Gastrocnemius medialis (tissue), 4 donors: ENCODE measurements at regions of chr21 and their contacts with region 1.

Region 1: GRCh38 chr21:27564684-27565301 is 597.9 kb upstream of the ADAMTS5 start:
- DNase-seq: peak in 1 of 2 donors; percentile 42
- ATAC-seq: peak in 1 of 2 donors; percentile 76
- H3K4me3 ChIP-seq: no peak overlapping the region
- H3K27ac ChIP-seq: peak overlapping the region in 2 of 4 donors; percentile 8 to 44
- H3K4me1 ChIP-seq: peaks cover 6 to 14% of the 10 kb centered on the region in 2 donors
- H3K27me3 ChIP-seq: no peaks in the 10 kb centered on the region
- CTCF ChIP-seq: peak; percentile 32 to 69 (median 58)
- POLR2A ChIP-seq: no peak

Region 2: DNA sequence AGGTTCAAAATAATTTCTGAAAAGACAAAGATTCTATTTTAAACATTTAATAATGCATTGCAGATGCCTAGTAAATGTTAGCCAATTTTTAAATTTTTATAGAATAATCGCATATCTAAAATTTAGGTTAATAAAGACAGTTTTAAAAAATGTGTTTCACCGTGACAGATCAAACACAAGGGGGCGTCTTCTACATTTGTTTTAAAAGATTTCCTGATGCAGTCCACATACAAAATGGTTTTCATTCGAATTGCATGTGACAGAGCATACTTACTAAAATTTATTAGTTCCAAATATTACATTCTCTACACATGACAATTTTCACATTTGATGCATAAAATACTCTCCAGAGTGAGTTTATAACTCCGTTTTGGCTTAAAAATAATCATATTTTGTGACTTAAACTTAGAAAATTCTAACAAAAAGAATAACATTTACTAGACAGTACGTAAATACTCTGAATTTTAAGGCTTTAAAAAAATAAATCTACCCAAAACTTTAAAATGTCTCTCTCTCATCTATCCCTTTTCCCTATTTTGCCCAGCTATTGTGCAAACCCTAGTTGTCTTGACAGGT is 795.1 kb before region 1 on chr21:
- in situ Hi-C with region 1: no loop called
- intact Hi-C with region 1: loop called (anchors 10 kb)
- DNase-seq: no peak
- ATAC-seq: no peak
- H3K4me3 ChIP-seq: no peak overlapping the region
- H3K27ac ChIP-seq: no peak overlapping the region
- H3K4me1 ChIP-seq: peaks cover 0 to 5% of the 10 kb centered on the region in 2 donors
- H3K27me3 ChIP-seq: no peaks in the 10 kb centered on the region
- CTCF ChIP-seq: peak in 4 of 5 experiments; percentile 39 to 68 (median 49)
- POLR2A ChIP-seq: no peak

Region 3: DNA sequence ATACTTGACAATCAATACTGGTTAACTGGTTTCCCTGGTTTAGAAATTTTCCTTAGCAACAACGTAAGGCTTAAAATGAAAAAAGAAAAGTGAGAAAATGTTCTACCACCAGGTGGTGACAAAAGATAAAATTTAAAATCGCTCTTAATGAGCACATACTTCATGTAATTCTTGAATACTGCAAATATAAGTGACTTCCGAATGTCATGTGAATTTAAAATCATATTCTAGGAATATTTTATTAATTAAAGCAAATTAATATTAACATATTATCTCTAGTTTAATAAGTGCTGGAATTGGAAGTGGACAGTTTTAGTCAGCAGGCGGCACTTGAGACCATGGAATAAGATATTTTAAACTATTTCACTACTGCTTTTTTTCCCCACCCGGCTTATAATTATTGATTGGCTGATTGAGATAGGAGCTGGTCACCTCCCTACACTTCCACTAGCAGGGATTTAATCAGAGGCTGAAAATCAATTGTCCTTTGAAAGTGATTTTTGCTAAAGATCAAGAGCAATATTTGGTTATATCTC is 714.6 kb before region 1 on chr21:
- in situ Hi-C with region 1: loop called in 2 of 4 experiments (anchors 5 to 25 kb)
- intact Hi-C with region 1: loop called (anchors 1 kb)
- DNase-seq: no peak
- ATAC-seq: no peak
- H3K4me3 ChIP-seq: peak overlapping the region in 3 of 4 donors; percentile 9 to 28 (median 15)
- H3K27ac ChIP-seq: no peak overlapping the region
- H3K4me1 ChIP-seq: no peaks in the 10 kb centered on the region
- H3K27me3 ChIP-seq: no peaks in the 10 kb centered on the region
- CTCF ChIP-seq: peak; percentile 64 to 87 (median 67)
- POLR2A ChIP-seq: no peak

Region 4: DNA sequence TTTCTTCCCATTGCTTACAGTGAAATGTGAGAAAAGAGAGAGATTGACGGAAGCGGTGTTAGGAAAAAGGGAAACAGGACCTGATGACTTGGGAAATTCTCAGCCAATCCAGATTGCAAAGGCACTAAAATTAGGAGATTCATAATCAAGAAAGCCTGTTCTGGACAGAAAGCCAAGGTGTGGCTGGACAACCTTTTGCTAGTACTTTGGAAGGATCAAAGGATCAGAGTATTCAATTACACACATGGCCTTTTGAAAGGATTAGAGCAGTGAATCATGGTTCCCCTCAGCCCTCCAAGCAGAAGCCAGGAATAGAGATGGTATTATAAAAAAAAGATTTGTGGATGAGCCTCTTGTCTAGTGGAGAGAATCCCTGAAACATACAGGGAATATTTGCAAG is 71.9 kb after region 1 on chr21:
- in situ Hi-C with region 1: no loop called
- intact Hi-C with region 1: loop called (anchors 5 kb)
- DNase-seq: peak; percentile 73 to 85
- ATAC-seq: peak; percentile 99 to 100
- H3K4me3 ChIP-seq: peak overlapping the region in 1 of 4 donors; percentile 3
- H3K27ac ChIP-seq: peak overlapping the region; percentile 83 to 93 (median 88)
- H3K4me1 ChIP-seq: peaks cover 10 to 18% of the 10 kb centered on the region in 2 donors
- H3K27me3 ChIP-seq: no peaks in the 10 kb centered on the region
- CTCF ChIP-seq: no peak
- POLR2A ChIP-seq: peak in 1 of 2 donors; percentile 43

Region 5: GRCh38 chr21:27694667-27695066 is 129.9 kb after region 1 on chr21:
- in situ Hi-C with region 1: no loop called
- intact Hi-C with region 1: loop called (anchors 5 kb)
- DNase-seq: no peak
- ATAC-seq: no peak
- H3K4me3 ChIP-seq: no peak overlapping the region
- H3K27ac ChIP-seq: no peak overlapping the region
- H3K4me1 ChIP-seq: no peaks in the 10 kb centered on the region
- H3K27me3 ChIP-seq: no peaks in the 10 kb centered on the region
- CTCF ChIP-seq: no peak
- POLR2A ChIP-seq: no peak

Region 6: GRCh38 chr21:27700974-27701614 is 136.3 kb after region 1 on chr21:
- in situ Hi-C with region 1: loop called in 1 of 4 experiments (anchors 10 kb)
- intact Hi-C with region 1: loop called (anchors 5 kb)
- DNase-seq: peak; percentile 47 to 78
- ATAC-seq: peak; percentile 94 to 97
- H3K4me3 ChIP-seq: peak overlapping the region in 1 of 4 donors; percentile 6
- H3K27ac ChIP-seq: no peak overlapping the region
- H3K4me1 ChIP-seq: peaks cover 0 to 7% of the 10 kb centered on the region in 2 donors
- H3K27me3 ChIP-seq: no peaks in the 10 kb centered on the region
- CTCF ChIP-seq: peak; percentile 83 to 87 (median 86)
- POLR2A ChIP-seq: no peak